ENCODE measurements at regions of chr15 and their contacts with region 1.

Region 1: GRCh38 chr15:100694381-100695021 is 92.1 kb downstream of the ASB7 start:
- DNase-seq: no peak
- H3K4me3 ChIP-seq: no peak overlapping the region
- H3K27ac ChIP-seq: no peak overlapping the region
- H3K27me3 ChIP-seq: no peaks in the 10 kb centered on the region
- CTCF ChIP-seq: no peak

Region 2: DNA sequence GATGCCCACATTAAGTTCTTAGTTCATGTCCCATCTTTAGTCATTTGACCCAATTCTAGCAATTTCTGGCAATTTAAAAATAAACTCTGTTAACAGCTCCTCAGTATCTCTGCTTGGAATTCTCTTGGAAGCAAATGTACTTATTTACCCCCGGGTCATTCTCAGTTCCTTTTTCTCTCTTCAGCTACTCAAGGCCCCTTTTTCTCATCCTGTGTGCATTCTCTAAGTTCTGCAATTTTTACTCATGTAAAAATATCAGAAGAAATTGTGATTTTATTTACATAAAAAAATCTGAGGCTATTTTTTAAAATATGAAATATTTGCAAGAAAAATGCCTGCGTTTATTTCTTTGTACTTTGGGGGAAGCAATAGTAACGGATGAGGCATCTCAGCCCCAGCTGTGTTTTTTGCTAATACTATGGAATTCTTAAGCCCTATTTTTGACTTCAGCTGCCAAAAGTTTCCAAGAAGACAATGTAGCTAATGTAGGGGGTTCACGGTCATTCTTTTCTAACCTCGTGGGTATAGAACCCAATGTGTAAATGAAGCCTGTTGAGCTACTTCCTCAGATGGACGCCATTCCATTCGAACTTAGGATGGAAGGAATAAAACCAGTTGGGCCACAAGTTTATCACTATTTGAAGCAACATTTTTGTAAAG is 185.7 kb before region 1 on chr15:
- CTCF ChIA-PET with region 1: no interaction called
- POLR2A ChIA-PET with region 1: no interaction called
- DNase-seq: no peak
- H3K4me3 ChIP-seq: no peak overlapping the region
- H3K27ac ChIP-seq: no peak overlapping the region
- H3K27me3 ChIP-seq: no peaks in the 10 kb centered on the region
- CTCF ChIP-seq: no peak

Region 3: GRCh38 chr15:100671858-100672543 is 22.5 kb before region 1 on chr15:
- CTCF ChIA-PET with region 1: interaction called, 12 read pairs
- POLR2A ChIA-PET with region 1: no interaction called
- DNase-seq: no peak
- H3K4me3 ChIP-seq: no peak overlapping the region
- H3K27ac ChIP-seq: no peak overlapping the region
- H3K27me3 ChIP-seq: no peaks in the 10 kb centered on the region
- CTCF ChIP-seq: peak; percentile 72